HCT116 (cell line): ENCODE measurements at regions of chr17 and their contacts with region 1.

Region 1: GRCh38 chr17:60036796-60037612 is 41.7 kb downstream of the HEATR6 start:
- DNase-seq: peak; percentile 85
- ATAC-seq: peak; percentile 96
- H3K4me3 ChIP-seq: no peak overlapping the region
- H3K27ac ChIP-seq: no peak overlapping the region
- H3K4me1 ChIP-seq: peaks cover 7 to 11% of the 10 kb centered on the region in 2 experiments; a peak in 3 of 4 replicates
- H3K27me3 ChIP-seq: no peaks in the 10 kb centered on the region
- CTCF ChIP-seq: peak; percentile 87 to 100 (median 100)
- POLR2A ChIP-seq: no peak
- RAD21 ChIP-seq: peak; percentile 71

Region 2: GRCh38 chr17:59311130-59311920 is 725.7 kb before region 1 on chr17:
- CTCF ChIA-PET with region 1: interaction called, 11 read pairs
- POLR2A ChIA-PET with region 1: no interaction called
- RAD21 ChIA-PET with region 1: interaction called in 1 of 2 experiments, 3 read pairs
- intact Hi-C with region 1: loop called (anchors 5 kb)
- DNase-seq: peak; percentile 78
- ATAC-seq: peak; percentile 93
- H3K4me3 ChIP-seq: no peak overlapping the region
- H3K27ac ChIP-seq: no peak overlapping the region
- H3K4me1 ChIP-seq: peaks cover 3 to 13% of the 10 kb centered on the region in 2 experiments; a peak in 3 of 4 replicates
- H3K27me3 ChIP-seq: no peaks in the 10 kb centered on the region
- CTCF ChIP-seq: peak; percentile 84 to 99 (median 97); a peak in 5 of 6 replicates
- POLR2A ChIP-seq: no peak
- RAD21 ChIP-seq: peak; percentile 98

Region 3: GRCh38 chr17:59331129-59331928 is 705.7 kb before region 1 on chr17 and contains the start of gene YPEL2:
- CTCF ChIA-PET with region 1: no interaction called
- POLR2A ChIA-PET with region 1: no interaction called
- RAD21 ChIA-PET with region 1: no interaction called
- intact Hi-C with region 1: no loop called
- DNase-seq: peak; percentile 82
- ATAC-seq: peak; percentile 98
- H3K4me3 ChIP-seq: peak within 1 kb of the TSS; percentile 61 to 65
- H3K27ac ChIP-seq: peak within 1 kb of the TSS; percentile 45; the same call in 1 of the 2 replicates
- H3K4me1 ChIP-seq: peaks cover 14 to 27% of the 10 kb centered on the region in 2 experiments
- H3K27me3 ChIP-seq: peaks cover 26% of the 10 kb centered on the region
- CTCF ChIP-seq: no peak
- POLR2A ChIP-seq: peak; percentile 30
- RAD21 ChIP-seq: no peak
- total RNA-seq, gene YPEL2: 4.7 TPM

Region 4: DNA sequence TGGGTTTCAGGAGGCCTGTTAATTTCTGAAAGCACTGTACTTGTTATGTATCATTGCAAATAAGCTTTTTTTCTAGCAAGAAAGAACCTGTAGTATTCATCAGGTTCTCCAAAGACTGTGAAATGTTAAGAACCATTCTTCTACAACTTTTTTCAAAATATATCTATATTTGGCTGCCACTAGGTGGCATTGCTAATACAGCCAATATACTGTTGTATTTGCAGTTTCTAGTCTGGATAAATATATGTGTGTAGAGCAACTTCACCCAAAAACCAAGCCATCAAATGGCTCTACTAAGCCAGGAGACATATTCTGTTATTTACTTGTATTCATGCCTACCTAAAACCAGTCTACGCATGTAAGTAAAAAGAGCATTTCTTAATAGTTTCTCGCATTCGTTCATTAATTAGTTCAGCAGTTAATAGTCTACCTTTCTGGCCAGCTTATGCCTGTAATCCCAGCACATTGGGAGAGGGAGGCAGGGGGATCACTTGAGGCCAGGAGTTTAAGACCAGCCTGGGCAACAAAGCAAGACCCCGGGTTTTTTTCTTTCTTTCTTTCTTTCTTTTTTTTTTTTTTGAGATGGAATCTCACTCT is 290.1 kb before region 1 on chr17:
- CTCF ChIA-PET with region 1: interaction called, 8 read pairs
- POLR2A ChIA-PET with region 1: no interaction called
- RAD21 ChIA-PET with region 1: interaction called in 1 of 2 experiments, 4 read pairs
- intact Hi-C with region 1: loop called (anchors 5 kb)
- DNase-seq: no peak
- ATAC-seq: peak; percentile 64
- H3K4me3 ChIP-seq: no peak overlapping the region
- H3K27ac ChIP-seq: peak overlapping the region; percentile 26
- H3K4me1 ChIP-seq: peaks cover 39 to 42% of the 10 kb centered on the region in 2 experiments
- H3K27me3 ChIP-seq: no peaks in the 10 kb centered on the region
- CTCF ChIP-seq: peak; percentile 57 to 89 (median 88)
- POLR2A ChIP-seq: no peak
- RAD21 ChIP-seq: peak; percentile 93

Region 5: GRCh38 chr17:59914274-59914854 is 122.6 kb before region 1 on chr17:
- CTCF ChIA-PET with region 1: interaction called, 28 read pairs
- POLR2A ChIA-PET with region 1: no interaction called
- RAD21 ChIA-PET with region 1: interaction called in 1 of 2 experiments, 5 read pairs
- intact Hi-C with region 1: loop called (anchors 5 kb)
- DNase-seq: peak; percentile 19
- ATAC-seq: peak; percentile 72
- H3K4me3 ChIP-seq: no peak overlapping the region
- H3K27ac ChIP-seq: no peak overlapping the region
- H3K4me1 ChIP-seq: no peaks in the 10 kb centered on the region
- H3K27me3 ChIP-seq: no peaks in the 10 kb centered on the region
- CTCF ChIP-seq: peak; percentile 65 to 76 (median 71); a peak in 5 of 6 replicates
- POLR2A ChIP-seq: no peak
- RAD21 ChIP-seq: peak; percentile 74

Region 6: DNA sequence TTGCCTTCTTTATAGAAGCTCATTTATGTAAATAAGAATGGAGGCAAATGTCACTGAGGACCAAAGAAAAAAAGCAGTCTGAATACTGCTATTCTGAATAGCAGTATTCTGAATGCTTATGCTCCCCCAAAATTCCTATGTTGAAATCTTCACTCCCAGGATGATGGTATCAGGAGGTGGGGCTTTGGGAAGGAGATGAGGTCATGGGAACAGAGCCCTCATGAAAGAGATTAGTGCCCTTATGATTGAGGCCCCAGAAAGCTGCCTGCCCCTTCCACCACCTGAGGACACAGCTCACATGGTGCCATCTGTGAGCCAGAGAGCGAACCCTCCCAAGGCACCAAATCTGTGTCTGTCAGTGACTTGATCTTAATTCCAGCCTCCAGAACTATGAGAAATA is 12.9 kb after region 1 on chr17:
- CTCF ChIA-PET with region 1: interaction called, 20 read pairs
- POLR2A ChIA-PET with region 1: no interaction called
- RAD21 ChIA-PET with region 1: no interaction called
- intact Hi-C with region 1: no loop called
- DNase-seq: no peak
- ATAC-seq: no peak
- H3K4me3 ChIP-seq: no peak overlapping the region
- H3K27ac ChIP-seq: no peak overlapping the region
- H3K4me1 ChIP-seq: no peaks in the 10 kb centered on the region
- H3K27me3 ChIP-seq: no peaks in the 10 kb centered on the region
- CTCF ChIP-seq: no peak
- POLR2A ChIP-seq: no peak
- RAD21 ChIP-seq: no peak

Region 7: DNA sequence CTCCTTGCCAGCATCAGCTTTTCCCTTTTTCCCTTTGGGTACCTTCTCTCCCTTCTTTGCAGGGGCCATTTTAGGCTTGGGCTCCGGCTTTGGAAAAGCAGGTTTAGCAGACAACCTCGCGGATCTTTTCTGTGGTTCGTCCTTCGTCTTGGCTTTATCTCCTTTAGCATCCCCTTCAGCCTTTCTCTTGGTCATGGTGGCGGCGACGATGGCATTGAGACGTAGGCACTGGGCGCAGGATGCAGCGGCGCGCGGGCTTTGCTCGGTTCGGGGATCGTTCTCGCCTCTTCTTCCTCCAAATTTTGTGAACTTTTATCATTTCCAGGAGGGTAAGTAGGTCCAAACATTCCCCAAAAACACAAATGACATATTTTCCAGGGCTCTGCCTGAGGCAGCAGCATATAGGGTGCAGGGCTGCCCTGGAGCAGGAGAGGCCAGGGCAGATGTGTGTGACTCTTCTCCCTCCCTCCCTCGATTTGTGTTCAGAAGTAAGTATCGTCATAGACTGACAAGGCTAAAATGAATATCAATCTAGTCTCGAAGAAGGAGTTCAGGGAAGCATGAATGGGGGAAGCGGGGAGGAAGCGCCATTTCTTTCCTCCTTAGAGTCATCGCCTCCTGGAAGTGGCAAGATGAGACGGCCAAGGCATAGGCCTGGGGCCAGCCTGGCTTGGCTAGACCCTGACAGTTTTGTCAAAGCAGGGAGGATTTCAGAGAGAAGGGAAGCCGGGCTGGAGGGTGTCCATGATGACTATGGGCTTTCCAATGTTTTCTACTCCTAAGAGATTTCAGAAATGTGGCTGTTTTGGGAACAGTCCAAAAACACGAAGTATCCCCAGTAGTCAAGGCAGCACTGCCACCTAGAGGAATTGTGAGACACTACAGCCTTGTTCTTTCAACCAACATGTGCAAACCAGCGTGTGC is 398.5 kb after region 1 on chr17:
- CTCF ChIA-PET with region 1: no interaction called
- POLR2A ChIA-PET with region 1: no interaction called
- RAD21 ChIA-PET with region 1: no interaction called
- intact Hi-C with region 1: loop called (anchors 5 kb)
- DNase-seq: peak; percentile 79
- ATAC-seq: peak; percentile 87
- H3K4me3 ChIP-seq: no peak overlapping the region
- H3K27ac ChIP-seq: no peak overlapping the region
- H3K4me1 ChIP-seq: peaks cover 0 to 5% of the 10 kb centered on the region in 2 experiments; a peak in 2 of 4 replicates
- H3K27me3 ChIP-seq: no peaks in the 10 kb centered on the region
- CTCF ChIP-seq: peak; percentile 95 to 99 (median 97)
- POLR2A ChIP-seq: no peak
- RAD21 ChIP-seq: peak; percentile 100